Left colon (tissue), 2 donors: ENCODE measurements at regions of chr14 and their contacts with region 1.

Region 1: DNA sequence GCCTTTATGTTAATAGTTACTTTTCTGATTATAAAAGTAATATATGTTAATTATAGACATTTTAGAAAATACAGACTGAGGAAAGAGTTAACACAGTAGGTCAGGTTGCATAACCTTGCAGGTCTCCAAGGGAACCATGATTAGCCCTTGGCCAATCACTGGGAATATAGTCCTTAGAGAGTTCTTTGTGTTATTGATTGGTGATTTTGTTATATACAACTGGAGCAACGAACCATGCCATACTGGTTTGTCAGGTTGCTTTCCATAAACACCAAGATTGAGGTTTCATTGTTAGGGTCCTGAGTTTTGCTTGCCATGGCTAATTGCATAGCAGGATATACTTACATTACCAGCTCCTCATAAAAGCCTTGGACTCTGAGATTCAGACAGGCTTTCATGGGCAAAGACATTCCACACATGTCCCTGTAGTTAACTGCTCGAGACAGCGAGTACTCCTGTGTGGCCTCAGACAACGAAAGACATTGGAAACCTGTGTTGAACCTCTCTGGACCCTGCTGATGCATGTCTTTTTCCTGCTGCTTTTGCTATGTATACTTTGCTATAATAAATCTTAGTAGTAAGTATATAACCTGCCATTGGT is 33.7 kb downstream of the MAPK1IP1L start:
- DNase-seq: no peak
- ATAC-seq: peak; percentile 45

Region 2: DNA sequence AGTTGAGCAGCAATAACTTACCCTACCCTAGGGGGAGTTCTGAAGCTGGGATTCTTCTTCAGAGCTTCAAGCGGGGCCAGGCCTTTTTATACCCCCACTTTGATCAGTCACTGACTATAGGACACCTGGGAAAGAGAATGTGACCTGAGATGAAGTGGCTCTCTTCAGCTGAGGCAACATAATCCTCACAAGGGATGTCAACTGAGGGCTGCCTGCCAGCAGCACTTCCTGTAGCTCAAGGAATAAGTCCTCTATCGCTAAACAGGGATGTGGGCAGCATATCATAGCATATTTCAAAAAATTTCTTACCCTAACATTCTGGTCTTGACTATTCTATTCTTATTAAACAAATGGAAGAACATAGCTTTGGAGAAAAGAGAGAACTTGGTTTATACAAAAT is 61.3 kb after region 1 on chr14:
- intact Hi-C with region 1: loop called in 1 of 2 experiments (anchors 10 kb)
- DNase-seq: no peak
- ATAC-seq: peak; percentile 12

Region 3: DNA sequence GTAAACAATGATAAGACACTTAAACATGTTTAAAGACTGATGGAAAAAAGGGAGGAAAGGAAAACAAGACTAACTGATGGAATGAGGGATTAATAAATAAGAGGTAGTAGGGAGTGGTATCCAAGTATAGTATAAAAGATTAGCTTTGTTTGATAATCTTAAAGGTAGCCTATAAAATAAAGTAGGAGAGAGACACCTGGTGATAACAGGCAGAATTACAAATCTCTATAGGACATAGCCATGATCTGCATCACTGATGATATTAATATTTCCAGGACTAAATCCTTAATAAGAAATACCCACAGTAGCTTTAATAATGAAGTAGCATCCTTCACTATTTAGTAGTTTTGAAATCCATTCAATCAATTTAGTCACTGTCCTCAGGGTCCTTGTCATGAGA is 75.8 kb after region 1 on chr14:
- intact Hi-C with region 1: loop called in 1 of 2 experiments (anchors 2 kb)
- DNase-seq: no peak
- ATAC-seq: peak; percentile 87